ENCODE measurements at regions of chr18 and their contacts with region 1.

Region 1: GRCh38 chr18:47772374-47773248 is 157.8 kb downstream of the SMAD2 start:
- DNase-seq: peak; percentile 43 to 65
- ATAC-seq: peak; percentile 74 to 85 (median 80)
- H3K4me3 ChIP-seq: no peak overlapping the region
- H3K27ac ChIP-seq: no peak overlapping the region
- H3K4me1 ChIP-seq: no peaks in the 10 kb centered on the region
- H3K27me3 ChIP-seq: no peaks in the 10 kb centered on the region
- CTCF ChIP-seq: peak; percentile 75

Region 2: GRCh38 chr18:48022531-48023329 is 250.1 kb after region 1 on chr18:
- intact Hi-C with region 1: loop called (anchors 2 to 5 kb)
- DNase-seq: no peak
- ATAC-seq: peak; percentile 72 to 87 (median 78)
- H3K4me3 ChIP-seq: no peak overlapping the region
- H3K27ac ChIP-seq: no peak overlapping the region
- H3K4me1 ChIP-seq: peaks cover 8% of the 10 kb centered on the region
- H3K27me3 ChIP-seq: peaks cover 0 to 4% (median 0%) of the 10 kb centered on the region in 3 donors
- CTCF ChIP-seq: peak; percentile 61

Measured in psoas muscle (tissue), 8 donors.